Esophagus muscularis mucosa (tissue), 4 donors: ENCODE measurements at regions of chr1 and their contacts with region 1.

Region 1: GRCh38 chr1:225480825-225481434 is 53.1 kb upstream of the LBR start:
- DNase-seq: peak; percentile 90
- H3K4me3 ChIP-seq: no peak overlapping the region
- H3K27ac ChIP-seq: peak overlapping the region in 1 of 4 donors; percentile 62
- H3K4me1 ChIP-seq: peaks cover 0 to 42% (median 33%) of the 10 kb centered on the region in 4 donors
- H3K27me3 ChIP-seq: no peaks in the 10 kb centered on the region
- CTCF ChIP-seq: peak; percentile 62 to 79 (median 67)
- EP300 ChIP-seq: no peak
- POLR2A ChIP-seq: no peak

Region 2: GRCh38 chr1:225652729-225653462 is 172.0 kb after region 1 on chr1 and contains the start of gene ENAH:
- intact Hi-C with region 1: loop called (anchors 10 kb)
- DNase-seq: no peak
- H3K4me3 ChIP-seq: peak within 1 kb of the TSS; percentile 93 to 98 (median 96)
- H3K27ac ChIP-seq: peak within 1 kb of the TSS; percentile 96 to 100 (median 98)
- H3K4me1 ChIP-seq: peaks cover 28 to 58% (median 55%) of the 10 kb centered on the region in 4 donors
- H3K27me3 ChIP-seq: peaks cover 0 to 8% (median 0%) of the 10 kb centered on the region in 4 donors
- CTCF ChIP-seq: no peak
- EP300 ChIP-seq: no peak
- POLR2A ChIP-seq: peak; percentile 38
- total RNA-seq, gene ENAH: 198 to 229 (median 201) TPM